ENCODE measurements at regions of chr12 and their contacts with region 1.

Region 1: GRCh38 chr12:9331218-9331626 is 123.0 kb upstream of the PZP start:
- DNase-seq: peak; percentile 37 to 72 (median 62)
- ATAC-seq: peak; percentile 85
- H3K4me3 ChIP-seq: no peak overlapping the region
- H3K27ac ChIP-seq: no peak overlapping the region
- H3K4me1 ChIP-seq: peaks cover 0 to 8% of the 10 kb centered on the region in 2 experiments; a peak in 2 of 5 replicates
- H3K27me3 ChIP-seq: no peaks in the 10 kb centered on the region
- CTCF ChIP-seq: peak; percentile 74 to 93 (median 79)
- EP300 ChIP-seq: no peak
- POLR2A ChIP-seq: no peak
- RAD21 ChIP-seq: peak; percentile 75 to 83

Region 2: DNA sequence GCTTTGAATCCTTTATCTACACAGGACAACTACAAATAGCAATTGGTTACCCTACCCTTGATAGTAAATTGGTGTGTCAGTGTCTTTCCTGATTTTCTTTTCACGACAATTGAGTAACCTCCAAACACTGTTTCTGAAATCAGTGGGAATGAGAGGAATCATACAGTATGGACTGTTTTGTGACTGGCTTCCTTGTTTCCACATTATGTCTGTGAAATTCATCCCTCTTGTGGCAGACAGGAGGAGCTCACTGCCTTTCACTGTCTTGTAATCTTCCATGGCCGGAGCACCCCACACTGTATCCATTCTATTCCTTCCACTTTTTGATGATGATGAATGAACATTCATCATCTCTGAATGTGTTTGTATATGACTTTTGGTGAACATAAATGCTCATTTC is 41.0 kb after region 1 on chr12:
- CTCF ChIA-PET with region 1: no interaction called
- POLR2A ChIA-PET with region 1: no interaction called
- in situ Hi-C with region 1: no loop called
- intact Hi-C with region 1: loop called (anchors 2 kb)
- DNase-seq: no peak
- ATAC-seq: peak; percentile 71; the same call in 2 of the 3 replicates
- H3K4me3 ChIP-seq: no peak overlapping the region
- H3K27ac ChIP-seq: no peak overlapping the region
- H3K4me1 ChIP-seq: peaks cover 0 to 9% of the 10 kb centered on the region in 2 experiments; a peak in 4 of 5 replicates
- H3K27me3 ChIP-seq: peaks cover 0 to 11% of the 10 kb centered on the region in 2 experiments; a peak in 3 of 5 replicates
- CTCF ChIP-seq: peak; percentile 20 to 47 (median 25); a peak in 4 of 6 replicates
- EP300 ChIP-seq: no peak
- POLR2A ChIP-seq: no peak
- RAD21 ChIP-seq: peak in 1 of 2 experiments; percentile 54; a peak in 2 of 4 replicates

Region 3: DNA sequence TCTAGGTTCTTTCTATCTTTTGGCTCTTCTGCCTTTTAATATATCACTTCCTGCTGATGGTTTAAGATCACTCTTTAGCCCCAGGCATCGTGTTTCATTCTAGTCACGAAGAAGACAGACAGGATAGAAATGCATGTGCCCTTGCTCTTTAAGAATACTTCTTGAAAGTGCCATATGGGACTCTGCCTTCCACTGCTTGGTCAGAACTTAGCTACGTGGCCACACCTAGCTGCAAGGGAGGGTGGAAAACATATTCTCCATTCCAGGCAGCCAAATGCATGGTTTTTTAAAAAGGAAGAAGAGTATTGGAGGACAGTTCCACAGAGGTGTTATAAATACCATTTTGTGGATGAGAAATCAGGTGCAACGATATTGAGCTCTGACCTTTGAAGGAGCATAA is 133.2 kb after region 1 on chr12:
- CTCF ChIA-PET with region 1: interaction called, 7 read pairs
- POLR2A ChIA-PET with region 1: no interaction called
- in situ Hi-C with region 1: no loop called
- intact Hi-C with region 1: loop called (anchors 10 kb)
- DNase-seq: no peak
- ATAC-seq: no peak
- H3K4me3 ChIP-seq: no peak overlapping the region
- H3K27ac ChIP-seq: no peak overlapping the region
- H3K4me1 ChIP-seq: no peaks in the 10 kb centered on the region; a peak in 1 of 5 replicates
- H3K27me3 ChIP-seq: no peaks in the 10 kb centered on the region
- CTCF ChIP-seq: no peak
- EP300 ChIP-seq: no peak
- POLR2A ChIP-seq: no peak
- RAD21 ChIP-seq: no peak

Region 4: DNA sequence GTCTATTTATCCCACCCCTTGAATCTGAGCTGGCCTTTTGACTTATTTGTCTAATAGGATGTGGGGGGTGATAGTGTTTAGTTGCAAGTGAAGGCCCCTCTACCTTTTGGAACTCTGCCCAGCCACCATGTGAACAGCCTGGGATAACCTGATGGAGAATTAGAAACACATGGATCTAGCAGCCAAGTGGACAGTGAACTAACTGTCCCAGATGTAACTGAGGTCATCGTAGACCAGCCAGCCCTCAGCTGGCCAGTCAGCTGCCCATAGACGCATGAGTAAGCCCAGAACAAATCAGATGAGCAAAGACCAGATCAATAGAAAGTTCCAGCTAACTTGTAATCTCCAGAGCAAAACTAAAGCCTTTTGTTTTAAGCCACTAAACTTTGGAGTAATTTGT is 257.5 kb after region 1 on chr12:
- CTCF ChIA-PET with region 1: no interaction called
- POLR2A ChIA-PET with region 1: no interaction called
- in situ Hi-C with region 1: no loop called
- intact Hi-C with region 1: loop called (anchors 10 kb)
- DNase-seq: no peak
- ATAC-seq: no peak
- H3K4me3 ChIP-seq: no peak overlapping the region
- H3K27ac ChIP-seq: no peak overlapping the region
- H3K4me1 ChIP-seq: peaks cover 0 to 13% of the 10 kb centered on the region in 2 experiments; a peak in 3 of 5 replicates
- H3K27me3 ChIP-seq: no peaks in the 10 kb centered on the region
- CTCF ChIP-seq: no peak
- EP300 ChIP-seq: no peak
- POLR2A ChIP-seq: no peak
- RAD21 ChIP-seq: no peak

Region 5: DNA sequence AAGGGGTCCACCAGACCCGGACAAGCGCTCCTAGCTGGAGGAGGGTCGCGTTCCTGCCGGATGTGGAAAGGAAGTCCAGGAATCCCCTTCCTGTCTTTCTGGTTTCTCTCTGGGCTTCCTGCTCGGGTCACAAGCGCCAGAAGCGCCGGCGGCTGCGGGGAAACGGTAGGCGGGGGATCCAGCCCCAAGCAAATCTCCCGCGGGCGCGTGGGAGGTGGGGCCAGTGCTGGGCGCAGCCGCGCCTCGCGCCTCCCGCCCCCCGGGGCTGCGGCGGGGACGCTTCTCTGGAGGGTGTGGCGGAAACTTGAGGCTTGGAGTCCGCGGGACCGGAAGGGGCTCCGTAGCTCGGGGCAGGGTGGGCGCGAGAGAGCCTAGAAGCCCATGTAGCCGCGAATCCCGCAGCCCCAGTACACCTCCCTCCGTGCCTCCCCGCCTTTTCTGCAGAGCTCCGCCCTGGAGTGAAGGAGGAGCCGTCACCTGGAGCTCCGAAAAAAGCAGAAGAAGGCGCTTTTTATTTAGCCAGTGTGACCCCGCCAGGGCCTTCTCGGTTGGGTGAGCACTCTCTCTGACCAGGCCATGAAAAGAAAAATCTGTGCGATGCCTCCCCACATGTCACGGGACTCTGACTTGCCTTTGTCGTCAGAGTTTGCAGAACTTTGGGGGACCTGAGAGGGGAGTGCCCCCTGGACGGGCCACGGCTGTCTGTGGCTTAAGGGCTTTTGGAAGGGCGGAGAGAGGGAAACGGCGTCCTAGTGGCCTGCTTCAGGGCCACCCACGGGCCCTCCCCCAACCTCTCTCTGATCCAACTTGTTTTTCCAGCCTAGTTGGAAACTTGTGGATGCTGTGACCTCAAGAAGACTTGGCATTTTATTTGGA is 316.8 kb after region 1 on chr12:
- CTCF ChIA-PET with region 1: no interaction called
- POLR2A ChIA-PET with region 1: no interaction called
- in situ Hi-C with region 1: loop called (anchors 25 kb)
- intact Hi-C with region 1: no loop called
- DNase-seq: peak; percentile 86 to 91 (median 88)
- ATAC-seq: peak; percentile 90
- H3K4me3 ChIP-seq: peak overlapping the region; percentile 57
- H3K27ac ChIP-seq: peak overlapping the region; percentile 92
- H3K4me1 ChIP-seq: peaks cover 0 to 5% of the 10 kb centered on the region in 2 experiments; a peak in 3 of 5 replicates
- H3K27me3 ChIP-seq: no peaks in the 10 kb centered on the region
- CTCF ChIP-seq: no peak
- EP300 ChIP-seq: peak; percentile 12
- POLR2A ChIP-seq: peak; percentile 72
- RAD21 ChIP-seq: no peak

Measured in K562 (cell line).